Right ventricle myocardium inferior (tissue), 1 donor: ENCODE measurements at regions of chr10 and their contacts with region 1.

Region 1: DNA sequence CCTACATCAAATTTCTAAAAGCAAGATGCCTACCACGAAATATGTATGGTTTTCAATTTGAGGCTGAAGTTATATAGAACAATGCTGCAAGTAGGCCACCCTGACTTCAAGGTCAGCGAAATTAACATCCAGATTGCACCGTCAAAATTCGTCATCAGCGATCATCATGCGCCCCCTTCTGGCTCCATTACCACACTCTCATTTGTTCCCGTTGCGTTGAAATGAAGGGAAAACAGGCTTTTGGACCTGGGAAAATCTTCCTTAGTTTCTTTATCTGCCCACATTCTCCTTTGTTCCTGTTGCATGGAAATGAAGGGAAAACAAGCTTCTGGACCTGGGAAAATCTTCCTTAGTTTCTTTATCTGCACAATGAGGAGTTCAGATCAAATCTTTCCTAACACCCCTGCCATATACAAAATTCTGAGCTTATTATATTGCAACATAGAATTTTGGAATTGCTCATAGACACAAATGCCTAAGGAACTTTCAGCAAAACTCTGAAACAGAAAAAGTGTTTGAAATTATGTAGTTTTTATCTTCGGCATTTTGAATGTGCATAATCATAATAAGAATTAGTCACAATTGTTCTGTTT is 98.2 kb upstream of the PRKCQ start:
- DNase-seq: no peak
- ATAC-seq: no peak

Region 2: DNA sequence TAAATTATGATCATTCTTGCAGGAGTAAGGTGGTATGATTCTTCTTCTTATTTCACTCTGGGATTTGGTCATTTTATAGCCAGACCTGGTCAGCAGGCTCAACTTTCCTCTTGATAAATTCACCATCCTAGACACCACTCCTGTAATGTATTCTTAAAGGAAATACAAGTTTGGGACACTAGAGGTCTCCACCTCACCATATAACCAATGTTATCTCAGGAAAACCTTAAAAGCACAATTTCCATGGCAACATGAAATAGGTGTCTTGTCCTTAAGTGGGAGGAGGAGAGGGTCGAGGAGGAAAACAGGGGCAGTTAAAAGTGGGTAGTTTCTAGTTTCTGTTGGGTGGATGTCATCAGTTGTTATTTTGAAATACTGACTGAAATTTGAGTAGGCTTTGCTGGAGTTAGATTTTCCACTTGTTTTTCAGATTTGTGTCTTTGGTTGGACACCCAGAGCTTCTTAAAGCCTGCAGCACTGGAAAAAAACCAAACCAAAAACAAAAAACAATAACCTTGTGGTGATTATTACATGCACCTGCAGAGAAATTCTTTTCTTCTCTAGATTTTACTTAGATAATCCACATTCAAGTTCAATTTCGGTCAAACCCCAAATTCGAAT is 261.3 kb before region 1 on chr10:
- intact Hi-C with region 1: loop called (anchors 10 kb)
- DNase-seq: no peak
- ATAC-seq: peak; percentile 50

Region 3: DNA sequence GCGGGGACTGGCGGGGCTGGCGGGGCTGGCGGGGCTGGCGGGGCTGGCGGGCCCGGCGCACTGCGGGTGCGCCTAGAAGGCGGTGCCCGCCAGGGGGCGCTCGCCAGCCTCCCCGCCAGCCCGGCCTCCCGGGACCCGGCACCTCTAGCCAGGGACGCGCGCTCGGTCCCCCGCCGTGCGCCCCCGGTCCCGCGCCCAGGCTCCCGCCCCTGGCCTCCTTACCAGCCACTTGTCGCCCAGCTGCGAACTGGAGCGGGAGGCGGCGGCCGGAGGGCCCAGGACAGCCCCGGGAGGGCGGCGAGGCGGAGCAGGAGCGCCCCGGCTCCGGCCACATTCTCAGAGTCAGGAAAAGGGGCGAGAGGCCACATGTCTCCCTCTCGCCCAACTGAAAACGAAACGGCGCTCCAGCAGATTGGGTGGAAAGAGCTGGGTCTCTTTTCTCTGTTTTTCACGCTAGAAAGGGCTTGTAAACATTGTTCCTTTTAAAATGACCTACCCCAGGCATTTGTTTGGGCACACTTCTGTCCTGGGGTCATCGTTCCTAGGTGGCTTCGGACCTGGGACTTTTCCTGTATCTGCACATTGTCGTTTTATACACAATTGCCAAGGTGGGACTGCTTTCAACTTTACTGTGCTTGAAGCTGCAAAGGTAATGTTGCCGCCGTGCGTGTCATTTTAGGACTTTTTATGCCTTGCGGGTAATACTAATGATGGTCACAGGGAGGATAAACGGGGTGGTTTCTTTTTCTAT is 97.9 kb before region 1 on chr10:
- intact Hi-C with region 1: loop called (anchors 10 kb)
- DNase-seq: peak; percentile 88
- ATAC-seq: peak; percentile 81